A673 (cell line): ENCODE measurements at regions of chr17 and their contacts with region 1.

Region 1: GRCh38 chr17:1684378-1685189 is at the start of gene PRPF8:
- DNase-seq: peak; percentile 99
- H3K4me3 ChIP-seq: peak within 1 kb of the TSS; percentile 98
- H3K27ac ChIP-seq: peak within 1 kb of the TSS; percentile 94
- H3K4me1 ChIP-seq: peaks cover 8% of the 10 kb centered on the region
- H3K27me3 ChIP-seq: no peaks in the 10 kb centered on the region
- CTCF ChIP-seq: no peak
- total RNA-seq, gene PRPF8: 439 and 450 TPM in 2 replicates

Region 2: DNA sequence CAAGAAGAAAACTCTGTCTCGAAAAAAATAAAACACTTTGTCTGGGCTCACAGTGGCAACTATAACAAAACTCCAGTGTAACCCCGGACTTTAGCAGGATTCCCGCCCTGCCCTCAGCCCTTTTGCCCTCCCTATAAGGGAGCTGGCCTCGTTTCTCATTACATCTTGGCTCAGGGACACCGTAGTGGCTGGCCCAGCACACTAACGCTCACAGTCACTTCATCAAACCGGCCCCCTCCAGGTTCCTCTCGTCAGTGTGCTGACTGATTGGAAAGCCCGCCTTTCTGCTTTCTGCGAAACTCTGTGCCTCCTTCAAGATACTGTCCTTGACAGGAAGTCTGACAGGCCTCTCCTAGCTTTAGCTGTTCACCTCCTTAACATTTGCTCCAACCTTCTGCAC is 180.9 kb before region 1 on chr17:
- CTCF ChIA-PET with region 1: no interaction called
- POLR2A ChIA-PET with region 1: interaction called, 12 read pairs
- intact Hi-C with region 1: no loop called
- DNase-seq: no peak
- H3K4me3 ChIP-seq: no peak overlapping the region
- H3K27ac ChIP-seq: no peak overlapping the region
- H3K4me1 ChIP-seq: no peaks in the 10 kb centered on the region
- H3K27me3 ChIP-seq: no peaks in the 10 kb centered on the region
- CTCF ChIP-seq: no peak

Region 3: GRCh38 chr17:1555651-1556471 is 128.7 kb before region 1 on chr17:
- CTCF ChIA-PET with region 1: no interaction called
- POLR2A ChIA-PET with region 1: no interaction called
- intact Hi-C with region 1: no loop called
- DNase-seq: no peak
- H3K4me3 ChIP-seq: no peak overlapping the region
- H3K27ac ChIP-seq: no peak overlapping the region
- H3K4me1 ChIP-seq: peaks cover 8% of the 10 kb centered on the region
- H3K27me3 ChIP-seq: no peaks in the 10 kb centered on the region
- CTCF ChIP-seq: no peak

Region 4: GRCh38 chr17:1703063-1703462 is 18.5 kb after region 1 on chr17:
- CTCF ChIA-PET with region 1: no interaction called
- POLR2A ChIA-PET with region 1: interaction called, 10 read pairs
- intact Hi-C with region 1: no loop called
- DNase-seq: no peak
- H3K4me3 ChIP-seq: no peak overlapping the region
- H3K27ac ChIP-seq: no peak overlapping the region
- H3K4me1 ChIP-seq: no peaks in the 10 kb centered on the region
- H3K27me3 ChIP-seq: no peaks in the 10 kb centered on the region
- CTCF ChIP-seq: no peak

Region 5: DNA sequence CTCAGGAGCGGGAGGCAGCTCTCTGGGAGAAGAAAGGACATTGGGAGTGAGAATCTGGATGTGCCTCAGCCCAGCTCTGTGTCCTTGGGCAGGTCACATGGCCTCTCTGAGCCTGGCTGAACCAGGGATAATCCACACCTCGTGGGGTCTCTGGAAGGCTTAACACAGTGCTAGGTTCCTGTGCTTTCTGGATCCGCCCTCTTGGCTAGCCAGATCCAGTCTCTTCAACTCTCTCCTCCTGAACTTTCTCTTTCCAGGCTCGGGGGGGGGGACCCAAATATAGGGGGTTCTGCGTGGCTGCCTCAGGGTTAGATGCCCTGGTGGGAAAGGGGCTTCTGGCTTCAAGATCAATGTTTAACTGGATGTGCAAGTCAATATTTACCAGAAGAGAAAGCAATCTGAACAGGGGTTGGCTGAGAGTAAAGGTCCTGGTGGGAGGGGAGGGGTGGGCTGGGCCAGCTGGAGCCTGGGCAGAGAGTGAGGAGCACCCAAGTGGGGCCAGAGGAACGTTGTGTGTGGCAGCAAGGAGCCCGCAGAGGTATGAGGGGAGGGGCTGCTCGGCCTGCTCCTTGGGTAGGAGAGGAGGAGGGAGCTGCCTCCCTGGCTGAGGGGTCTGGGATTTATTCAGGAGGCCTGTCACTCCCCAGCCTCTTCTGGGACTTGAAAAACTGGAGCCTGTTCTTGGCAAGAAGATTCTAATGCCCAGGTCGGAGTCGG is 57.9 kb after region 1 on chr17 and contains the start of gene SERPINF2:
- CTCF ChIA-PET with region 1: no interaction called
- POLR2A ChIA-PET with region 1: no interaction called
- intact Hi-C with region 1: no loop called
- DNase-seq: no peak
- H3K4me3 ChIP-seq: no peak within 1 kb of the TSS
- H3K27ac ChIP-seq: no peak within 1 kb of the TSS
- H3K4me1 ChIP-seq: no peaks in the 10 kb centered on the region
- H3K27me3 ChIP-seq: no peaks in the 10 kb centered on the region
- CTCF ChIP-seq: no peak
- total RNA-seq, gene SERPINF2: 0.28 and 0.37 TPM in 2 replicates